ENCODE measurements at regions of chr2 and their contacts with region 1.

Region 1: DNA sequence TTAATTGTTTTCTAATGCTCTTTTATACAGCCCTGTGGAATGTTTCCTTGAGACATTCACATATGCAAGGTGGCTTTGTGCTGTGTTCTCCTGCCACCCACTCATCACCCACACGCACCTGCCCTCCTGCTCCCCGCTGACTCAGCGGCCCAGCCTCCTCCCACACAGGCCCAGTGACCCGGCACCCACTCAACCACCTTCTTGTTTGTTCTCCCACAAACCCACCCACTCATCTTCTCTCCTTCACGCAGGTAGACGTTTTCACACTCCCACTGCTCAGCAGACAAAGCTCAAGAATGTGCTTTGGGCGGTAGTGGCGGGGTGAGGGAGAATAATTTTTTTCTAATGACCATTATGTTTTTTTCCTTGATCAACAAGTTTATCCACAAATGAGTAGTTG is 28.6 kb upstream of the NEMP2 start:
- DNase-seq: no peak
- ATAC-seq: no peak
- H3K4me3 ChIP-seq: no peak overlapping the region
- H3K27ac ChIP-seq: no peak overlapping the region
- H3K4me1 ChIP-seq: no peaks in the 10 kb centered on the region
- H3K27me3 ChIP-seq: no peaks in the 10 kb centered on the region
- CTCF ChIP-seq: no peak

Region 2: GRCh38 chr2:190545555-190546385 is 17.3 kb before region 1 on chr2:
- CTCF ChIA-PET with region 1: no interaction called
- POLR2A ChIA-PET with region 1: interaction called, 18 read pairs
- in situ Hi-C with region 1: no loop called
- intact Hi-C with region 1: no loop called
- DNase-seq: no peak
- ATAC-seq: no peak
- H3K4me3 ChIP-seq: no peak overlapping the region
- H3K27ac ChIP-seq: no peak overlapping the region
- H3K4me1 ChIP-seq: no peaks in the 10 kb centered on the region
- H3K27me3 ChIP-seq: no peaks in the 10 kb centered on the region
- CTCF ChIP-seq: no peak

Region 3: DNA sequence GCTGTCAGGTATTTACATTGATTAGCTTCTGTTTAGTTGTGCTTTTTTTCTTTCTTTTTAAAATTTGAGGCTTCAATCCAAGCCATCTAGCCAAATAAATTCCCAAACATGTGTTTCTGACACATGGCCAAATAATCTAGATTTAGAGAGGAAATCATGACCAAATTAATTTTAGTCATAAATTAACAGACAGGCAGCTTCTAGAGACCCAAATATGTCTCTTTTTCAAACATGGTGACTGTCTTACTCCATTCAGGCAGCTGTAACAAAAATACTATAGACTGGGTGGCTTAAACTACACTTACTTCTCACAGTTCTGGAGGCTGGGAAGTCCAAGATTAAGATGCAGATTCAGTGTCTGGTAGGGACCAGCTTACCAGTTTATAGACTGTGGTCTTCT is 62.6 kb after region 1 on chr2:
- CTCF ChIA-PET with region 1: no interaction called
- POLR2A ChIA-PET with region 1: interaction called, 16 read pairs
- in situ Hi-C with region 1: no loop called
- intact Hi-C with region 1: no loop called
- DNase-seq: no peak
- ATAC-seq: no peak
- H3K4me3 ChIP-seq: no peak overlapping the region
- H3K27ac ChIP-seq: no peak overlapping the region
- H3K4me1 ChIP-seq: peaks cover 6% of the 10 kb centered on the region; the same call in 1 of the 2 replicates
- H3K27me3 ChIP-seq: no peaks in the 10 kb centered on the region
- CTCF ChIP-seq: no peak